Activated T-helper 1 cell treated with anti-CD3 and anti-CD28 coated beads, Interleukin-12 subunit alpha, Interleukin-12 subunit beta, Interleukin-2, Interleukin-4 antibody, amounts not matched to agents 30 ng/mL and 10 ng/mL and 1 ng/mL, durations not matched to agents 14 hours and 24 hours and 36 hours (primary cell): ENCODE measurements at regions of chr20 and their contacts with region 1.

Region 1: GRCh38 chr20:47508278-47508677 is 6.6 kb downstream of the NCOA3 start:
- DNase-seq: no peak
- H3K4me3 Mint-ChIP-seq: peak overlapping the region; percentile 70
- H3K27ac Mint-ChIP-seq: peak overlapping the region; percentile 85
- H3K4me1 Mint-ChIP-seq: peaks cover 73% of the 10 kb centered on the region
- H3K27me3 Mint-ChIP-seq: no peaks in the 10 kb centered on the region

Region 2: DNA sequence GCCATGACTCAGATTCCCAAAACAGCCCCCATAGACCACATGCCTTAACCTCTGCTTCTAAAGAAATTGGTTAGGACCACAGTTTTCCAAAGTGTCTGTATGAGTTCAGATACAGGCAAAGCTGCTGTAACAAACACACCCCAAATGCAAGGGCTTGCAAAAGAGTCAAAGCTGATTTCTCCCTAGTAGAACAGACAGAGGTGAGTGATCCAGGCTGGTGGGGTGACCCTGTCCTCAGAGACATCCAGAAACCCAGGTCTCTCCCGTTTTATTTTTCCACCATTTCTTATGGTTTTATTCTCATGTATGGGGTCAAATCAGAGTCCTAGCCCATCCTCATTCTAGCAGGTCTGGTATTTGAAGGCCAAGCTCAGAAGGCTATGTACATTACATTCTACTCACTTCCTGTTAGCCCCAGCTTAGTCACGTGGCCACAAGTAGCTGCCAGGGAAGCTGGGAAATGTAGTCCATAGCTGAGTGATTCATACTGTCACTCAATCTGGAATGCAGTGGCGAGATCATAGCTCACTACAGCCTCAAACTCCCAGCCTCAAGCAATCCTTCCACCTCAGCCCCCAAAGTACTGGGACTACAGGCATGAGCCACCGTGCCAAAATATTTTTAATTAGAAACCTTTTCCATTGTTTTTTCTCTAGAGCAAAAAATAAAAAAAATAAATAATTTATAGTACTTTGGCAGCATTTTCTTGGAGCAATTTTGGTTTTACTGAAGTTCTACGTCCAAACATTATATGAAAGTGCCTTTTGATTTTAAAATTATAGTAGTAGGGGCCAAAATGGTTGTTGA is 327.0 kb before region 1 on chr20:
- intact Hi-C with region 1: no loop called
- DNase-seq: no peak
- H3K4me3 Mint-ChIP-seq: no peak overlapping the region
- H3K27ac Mint-ChIP-seq: no peak overlapping the region
- H3K4me1 Mint-ChIP-seq: peaks cover 4% of the 10 kb centered on the region
- H3K27me3 Mint-ChIP-seq: no peaks in the 10 kb centered on the region

Region 3: DNA sequence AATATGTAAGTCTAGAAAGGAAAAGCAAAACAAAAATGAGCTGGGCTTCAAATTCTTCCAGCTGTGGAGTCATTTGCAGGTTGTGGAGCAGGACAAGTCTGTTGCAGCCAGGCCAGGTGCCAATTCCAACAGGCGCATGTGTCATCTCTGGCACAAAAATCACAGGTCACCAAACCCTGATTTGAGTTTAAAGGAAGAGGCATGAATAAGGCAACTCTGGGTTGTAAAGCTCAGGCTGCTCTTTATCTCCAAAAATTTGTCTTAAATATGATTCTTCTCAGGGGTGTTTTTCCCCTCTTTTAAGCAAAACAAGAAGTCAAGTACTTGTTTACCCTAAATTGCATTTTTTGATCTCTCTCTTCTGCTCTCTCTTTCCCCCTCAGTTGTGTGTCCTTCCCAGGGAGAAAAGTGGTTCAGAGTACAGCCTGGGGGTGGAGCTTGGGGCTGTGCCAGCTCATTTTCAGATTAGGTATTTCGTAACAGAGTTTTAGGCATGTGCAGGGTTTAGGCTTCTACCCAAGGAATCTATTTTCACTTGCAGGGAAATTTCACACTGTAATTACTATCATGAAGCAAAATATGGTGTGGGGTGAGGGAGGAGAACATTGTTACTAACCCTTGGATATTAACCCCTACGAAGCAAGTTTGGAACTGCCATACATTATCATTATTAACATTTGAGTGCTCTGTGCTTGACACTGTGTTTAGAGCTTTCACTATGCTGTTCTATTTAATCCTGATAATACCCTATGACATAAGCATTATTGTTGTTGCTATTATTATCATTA is 14.9 kb before region 1 on chr20:
- intact Hi-C with region 1: no loop called
- DNase-seq: peak; percentile 50
- H3K4me3 Mint-ChIP-seq: peak overlapping the region; percentile 38
- H3K27ac Mint-ChIP-seq: peak overlapping the region; percentile 85
- H3K4me1 Mint-ChIP-seq: peaks cover 39% of the 10 kb centered on the region
- H3K27me3 Mint-ChIP-seq: no peaks in the 10 kb centered on the region

Region 4: GRCh38 chr20:47540443-47541354 is 32.4 kb after region 1 on chr20:
- intact Hi-C with region 1: loop called (anchors 5 kb)
- DNase-seq: no peak
- H3K4me3 Mint-ChIP-seq: no peak overlapping the region
- H3K27ac Mint-ChIP-seq: peak overlapping the region; percentile 38
- H3K4me1 Mint-ChIP-seq: peaks cover 49% of the 10 kb centered on the region
- H3K27me3 Mint-ChIP-seq: no peaks in the 10 kb centered on the region

Region 5: GRCh38 chr20:47642624-47643023 is 134.3 kb after region 1 on chr20:
- intact Hi-C with region 1: no loop called
- DNase-seq: no peak
- H3K4me3 Mint-ChIP-seq: no peak overlapping the region
- H3K27ac Mint-ChIP-seq: no peak overlapping the region
- H3K4me1 Mint-ChIP-seq: no peaks in the 10 kb centered on the region
- H3K27me3 Mint-ChIP-seq: no peaks in the 10 kb centered on the region